ENCODE measurements at regions of chr1 and their contacts with region 1.

Region 1: DNA sequence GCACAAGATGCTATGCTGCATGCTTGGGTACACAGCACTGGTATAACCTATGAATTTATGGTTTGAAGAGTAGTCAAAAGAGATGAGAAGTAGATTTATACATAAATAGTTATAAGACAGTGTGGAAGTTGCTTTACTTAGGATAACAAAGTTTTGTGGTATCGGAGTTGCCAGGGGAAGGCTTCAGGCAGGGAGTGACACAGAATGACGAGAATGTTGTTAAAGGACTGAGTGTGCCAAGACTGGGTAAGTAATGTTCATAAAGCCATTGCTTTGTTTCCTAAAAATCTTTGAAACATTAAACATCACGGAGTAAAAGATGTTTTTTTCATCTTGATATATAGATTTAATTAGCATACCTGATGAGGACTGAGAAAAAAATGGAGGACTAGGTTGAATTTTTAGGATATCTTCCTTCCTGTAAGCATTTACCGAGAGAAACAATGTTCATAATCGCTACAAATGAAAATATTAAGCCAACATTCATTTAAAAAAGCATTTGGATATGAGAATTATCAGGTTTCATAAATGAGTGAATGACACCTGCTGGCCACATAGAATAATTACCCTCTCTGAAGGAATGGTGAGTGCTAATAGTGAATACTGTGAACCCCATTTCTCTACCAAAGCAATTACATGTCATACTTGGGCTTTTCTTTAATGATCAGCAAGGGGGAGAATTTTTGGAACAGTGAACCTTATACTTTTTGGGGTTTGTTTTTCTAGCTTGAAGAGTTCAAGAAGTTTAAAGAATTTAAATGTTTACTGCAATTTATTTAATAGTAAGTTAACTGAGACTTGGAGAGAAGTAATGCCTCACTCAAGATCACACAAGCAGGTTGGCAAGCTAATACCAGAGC is 28.4 kb downstream of the EXTL2 start:
- DNase-seq: no peak
- ATAC-seq: no peak
- H3K4me3 Mint-ChIP-seq: no peak overlapping the region
- H3K27ac Mint-ChIP-seq: no peak overlapping the region
- H3K4me1 Mint-ChIP-seq: no peaks in the 10 kb centered on the region
- H3K27me3 Mint-ChIP-seq: no peaks in the 10 kb centered on the region

Region 2: GRCh38 chr1:99180343-99180808 is 1685.9 kb before region 1 on chr1:
- CTCF ChIA-PET with region 1: no interaction called
- POLR2A ChIA-PET with region 1: no interaction called
- intact Hi-C with region 1: loop called (anchors 5 to 10 kb)
- DNase-seq: peak; percentile 80
- ATAC-seq: peak; percentile 91
- H3K4me3 Mint-ChIP-seq: no peak overlapping the region
- H3K27ac Mint-ChIP-seq: no peak overlapping the region
- H3K4me1 Mint-ChIP-seq: no peaks in the 10 kb centered on the region
- H3K27me3 Mint-ChIP-seq: no peaks in the 10 kb centered on the region

Region 3: GRCh38 chr1:99808391-99809115 is 1057.7 kb before region 1 on chr1:
- CTCF ChIA-PET with region 1: interaction called, 5 read pairs
- POLR2A ChIA-PET with region 1: no interaction called
- intact Hi-C with region 1: loop called (anchors 1 to 2 kb)
- DNase-seq: peak; percentile 47
- ATAC-seq: peak; percentile 93
- H3K4me3 Mint-ChIP-seq: no peak overlapping the region
- H3K27ac Mint-ChIP-seq: peak overlapping the region; percentile 75
- H3K4me1 Mint-ChIP-seq: peaks cover 11% of the 10 kb centered on the region
- H3K27me3 Mint-ChIP-seq: peaks cover 9% of the 10 kb centered on the region

Region 4: GRCh38 chr1:100265931-100266740 is 600.1 kb before region 1 on chr1 and contains the start of gene RTCA:
- CTCF ChIA-PET with region 1: interaction called, 10 read pairs
- POLR2A ChIA-PET with region 1: no interaction called
- intact Hi-C with region 1: no loop called
- DNase-seq: peak; percentile 97
- ATAC-seq: peak; percentile 93
- H3K4me3 Mint-ChIP-seq: peak within 1 kb of the TSS; percentile 100
- H3K27ac Mint-ChIP-seq: peak within 1 kb of the TSS; percentile 99
- H3K4me1 Mint-ChIP-seq: peaks cover 32% of the 10 kb centered on the region
- H3K27me3 Mint-ChIP-seq: no peaks in the 10 kb centered on the region
- total RNA-seq, gene RTCA: 47.8 to 53.0 TPM

Region 5: DNA sequence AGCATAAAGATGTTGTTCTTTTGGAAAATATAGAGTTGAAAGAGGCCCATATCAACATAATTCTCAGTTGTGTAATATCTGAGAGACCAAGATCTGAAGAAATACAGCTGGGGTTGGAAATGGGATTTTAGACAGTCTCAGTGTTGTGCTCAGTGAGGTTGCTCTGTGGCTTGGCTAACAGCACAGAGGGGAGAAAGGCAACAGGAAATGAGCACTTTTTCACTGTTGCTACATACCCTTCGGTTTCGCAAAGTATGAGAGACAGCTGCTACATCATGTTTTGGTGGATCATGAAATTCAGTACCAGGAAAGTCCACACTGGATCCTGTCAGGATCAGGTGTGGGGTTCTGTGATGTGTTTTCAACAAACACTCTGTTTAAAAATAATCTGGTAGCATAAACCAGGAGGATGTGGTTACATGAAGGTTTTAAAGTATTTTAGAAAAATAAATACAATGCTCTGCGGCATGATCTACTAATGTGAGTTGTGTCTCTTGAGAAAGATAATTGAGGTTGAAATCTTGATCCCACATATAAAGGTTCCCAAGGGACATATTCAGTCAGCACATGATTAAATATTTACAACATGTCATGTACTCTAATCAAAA is 335.3 kb before region 1 on chr1:
- CTCF ChIA-PET with region 1: interaction called, 4 read pairs
- POLR2A ChIA-PET with region 1: no interaction called
- intact Hi-C with region 1: loop called (anchors 5 to 10 kb)
- DNase-seq: peak; percentile 44
- ATAC-seq: peak; percentile 95
- H3K4me3 Mint-ChIP-seq: no peak overlapping the region
- H3K27ac Mint-ChIP-seq: peak overlapping the region; percentile 29
- H3K4me1 Mint-ChIP-seq: peaks cover 24% of the 10 kb centered on the region
- H3K27me3 Mint-ChIP-seq: peaks cover 9% of the 10 kb centered on the region

Region 6: DNA sequence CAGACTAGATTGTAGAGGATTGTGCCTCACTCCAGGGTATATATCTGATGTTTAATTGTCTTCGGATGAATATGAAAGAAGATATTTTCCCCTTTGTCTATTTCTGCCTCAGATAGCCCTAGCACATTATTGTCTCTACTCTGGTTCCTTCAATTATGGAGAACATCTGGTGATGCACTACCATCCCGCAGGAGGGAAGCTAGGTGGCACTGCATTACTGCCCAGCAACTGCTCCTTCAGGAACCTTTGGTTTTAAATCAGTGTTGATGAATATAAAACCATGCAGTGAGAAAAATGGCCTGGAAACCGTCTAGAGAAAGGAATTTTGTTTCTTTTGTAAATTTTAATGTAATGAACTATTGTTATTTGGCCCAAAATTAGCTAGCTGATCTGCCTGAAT is 259.8 kb before region 1 on chr1:
- CTCF ChIA-PET with region 1: interaction called, 11 read pairs
- POLR2A ChIA-PET with region 1: no interaction called
- intact Hi-C with region 1: loop called in 1 of 2 experiments (anchors 2 kb)
- DNase-seq: peak; percentile 22
- ATAC-seq: no peak
- H3K4me3 Mint-ChIP-seq: no peak overlapping the region
- H3K27ac Mint-ChIP-seq: no peak overlapping the region
- H3K4me1 Mint-ChIP-seq: no peaks in the 10 kb centered on the region
- H3K27me3 Mint-ChIP-seq: peaks cover 13% of the 10 kb centered on the region

Region 7: GRCh38 chr1:100883963-100884362 is 17.7 kb after region 1 on chr1:
- CTCF ChIA-PET with region 1: interaction called, 27 read pairs
- POLR2A ChIA-PET with region 1: no interaction called
- intact Hi-C with region 1: no loop called
- DNase-seq: no peak
- ATAC-seq: peak; percentile 60
- H3K4me3 Mint-ChIP-seq: no peak overlapping the region
- H3K27ac Mint-ChIP-seq: no peak overlapping the region
- H3K4me1 Mint-ChIP-seq: no peaks in the 10 kb centered on the region
- H3K27me3 Mint-ChIP-seq: no peaks in the 10 kb centered on the region

Region 8: GRCh38 chr1:100921109-100921706 is 54.9 kb after region 1 on chr1:
- CTCF ChIA-PET with region 1: no interaction called
- POLR2A ChIA-PET with region 1: no interaction called
- intact Hi-C with region 1: no loop called
- DNase-seq: no peak
- ATAC-seq: no peak
- H3K4me3 Mint-ChIP-seq: no peak overlapping the region
- H3K27ac Mint-ChIP-seq: peak overlapping the region; percentile 70
- H3K4me1 Mint-ChIP-seq: peaks cover 43% of the 10 kb centered on the region
- H3K27me3 Mint-ChIP-seq: no peaks in the 10 kb centered on the region